GM12878 (cell line): ENCODE measurements at regions of chr16 and their contacts with region 1.

Region 1: GRCh38 chr16:68264128-68265077 is at the start of gene SLC7A6:
- DNase-seq: no peak
- ATAC-seq: peak; percentile 71
- H3K4me3 ChIP-seq: peak within 1 kb of the TSS; percentile 87
- H3K27ac ChIP-seq: peak within 1 kb of the TSS; percentile 85
- H3K4me1 ChIP-seq: peaks cover 18% of the 10 kb centered on the region
- H3K27me3 ChIP-seq: no peaks in the 10 kb centered on the region
- CTCF ChIP-seq: peak; percentile 77 to 85 (median 81); a peak in 5 of 6 replicates
- EP300 ChIP-seq: no peak
- POLR2A ChIP-seq: peak; percentile 81
- RAD21 ChIP-seq: peak; percentile 43
- polyA plus RNA-seq, gene SLC7A6: 8.2 TPM

Region 2: GRCh38 chr16:68237243-68238028 is 27.0 kb before region 1 on chr16:
- CTCF ChIA-PET with region 1: interaction called, 108 read pairs
- POLR2A ChIA-PET with region 1: no interaction called
- RAD21 ChIA-PET with region 1: interaction called, 22 read pairs
- SMC1A ChIA-PET with region 1: interaction called, 14 read pairs
- in situ Hi-C with region 1: no loop called
- intact Hi-C with region 1: no loop called
- DNase-seq: peak; percentile 86
- ATAC-seq: peak; percentile 93
- H3K4me3 ChIP-seq: peak overlapping the region; percentile 62
- H3K27ac ChIP-seq: peak overlapping the region; percentile 14; the same call in 1 of the 2 replicates
- H3K4me1 ChIP-seq: peaks cover 11% of the 10 kb centered on the region
- H3K27me3 ChIP-seq: no peaks in the 10 kb centered on the region
- CTCF ChIP-seq: no peak
- EP300 ChIP-seq: no peak
- POLR2A ChIP-seq: peak; percentile 76
- RAD21 ChIP-seq: no peak

Region 3: GRCh38 chr16:68275611-68276191 is 11.3 kb after region 1 on chr16:
- CTCF ChIA-PET with region 1: interaction called, 40 read pairs
- POLR2A ChIA-PET with region 1: interaction called, 6 read pairs
- RAD21 ChIA-PET with region 1: interaction called, 10 read pairs
- SMC1A ChIA-PET with region 1: interaction called, 253 read pairs
- in situ Hi-C with region 1: no loop called
- intact Hi-C with region 1: no loop called
- DNase-seq: peak; percentile 96
- ATAC-seq: peak; percentile 87
- H3K4me3 ChIP-seq: peak overlapping the region; percentile 28; the same call in 1 of the 2 replicates
- H3K27ac ChIP-seq: peak overlapping the region; percentile 70
- H3K4me1 ChIP-seq: peaks cover 37% of the 10 kb centered on the region
- H3K27me3 ChIP-seq: no peaks in the 10 kb centered on the region
- CTCF ChIP-seq: no peak
- EP300 ChIP-seq: peak; percentile 44 to 80; a peak in 3 of 4 replicates
- POLR2A ChIP-seq: no peak
- RAD21 ChIP-seq: no peak

Region 4: GRCh38 chr16:68298907-68299561 is 34.6 kb after region 1 on chr16:
- CTCF ChIA-PET with region 1: interaction called, 16 read pairs
- POLR2A ChIA-PET with region 1: interaction called, 3 read pairs
- RAD21 ChIA-PET with region 1: interaction called, 10 read pairs
- SMC1A ChIA-PET with region 1: interaction called, 11 read pairs
- in situ Hi-C with region 1: no loop called
- intact Hi-C with region 1: no loop called
- DNase-seq: no peak
- ATAC-seq: no peak
- H3K4me3 ChIP-seq: no peak overlapping the region
- H3K27ac ChIP-seq: no peak overlapping the region
- H3K4me1 ChIP-seq: no peaks in the 10 kb centered on the region
- H3K27me3 ChIP-seq: no peaks in the 10 kb centered on the region
- CTCF ChIP-seq: no peak
- EP300 ChIP-seq: no peak
- POLR2A ChIP-seq: 0 out of 2 replicates have a peak, but pooled peaks have one; percentile 8
- RAD21 ChIP-seq: no peak

Region 5: GRCh38 chr16:68328151-68328859 is 63.9 kb after region 1 on chr16:
- CTCF ChIA-PET with region 1: interaction called, 747 read pairs
- POLR2A ChIA-PET with region 1: interaction called, 58 read pairs
- RAD21 ChIA-PET with region 1: interaction called, 399 read pairs
- SMC1A ChIA-PET with region 1: interaction called, 198 read pairs
- in situ Hi-C with region 1: loop called (anchors 5 kb)
- intact Hi-C with region 1: loop called (anchors 1 kb)
- DNase-seq: peak; percentile 57
- ATAC-seq: peak; percentile 98
- H3K4me3 ChIP-seq: no peak overlapping the region
- H3K27ac ChIP-seq: no peak overlapping the region
- H3K4me1 ChIP-seq: peaks cover 22% of the 10 kb centered on the region
- H3K27me3 ChIP-seq: no peaks in the 10 kb centered on the region
- CTCF ChIP-seq: peak; percentile 92 to 99 (median 98); a peak in 5 of 6 replicates
- EP300 ChIP-seq: no peak
- POLR2A ChIP-seq: no peak
- RAD21 ChIP-seq: peak; percentile 98

Region 6: DNA sequence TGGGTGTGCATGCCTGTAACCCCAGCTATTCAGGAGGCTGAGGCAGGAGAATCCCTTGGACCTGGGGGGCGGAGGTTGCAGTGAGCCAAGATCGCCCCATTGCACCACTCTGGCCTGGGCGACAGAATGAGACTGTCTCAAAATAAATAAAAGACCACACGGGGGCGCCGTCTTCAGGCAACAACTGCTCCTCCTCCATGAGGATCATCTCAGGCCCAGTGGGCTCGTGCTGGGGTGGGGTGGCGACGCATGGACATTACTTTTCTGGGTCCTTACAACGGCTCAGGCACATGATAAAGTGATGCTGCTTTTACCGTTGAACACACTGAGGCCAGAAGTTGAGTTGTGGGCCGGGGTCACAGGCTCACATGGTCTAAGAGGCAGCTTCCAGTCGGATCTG is 102.6 kb after region 1 on chr16:
- CTCF ChIA-PET with region 1: interaction called, 10 read pairs
- POLR2A ChIA-PET with region 1: interaction called, 4 read pairs
- RAD21 ChIA-PET with region 1: interaction called, 6 read pairs
- SMC1A ChIA-PET with region 1: interaction called, 4 read pairs
- in situ Hi-C with region 1: no loop called
- intact Hi-C with region 1: no loop called
- DNase-seq: no peak
- ATAC-seq: peak; percentile 26
- H3K4me3 ChIP-seq: no peak overlapping the region
- H3K27ac ChIP-seq: no peak overlapping the region
- H3K4me1 ChIP-seq: peaks cover 42% of the 10 kb centered on the region
- H3K27me3 ChIP-seq: no peaks in the 10 kb centered on the region
- CTCF ChIP-seq: peak; percentile 34 to 42 (median 41); a peak in 5 of 6 replicates
- EP300 ChIP-seq: no peak
- POLR2A ChIP-seq: no peak
- RAD21 ChIP-seq: peak; percentile 34; the same call in 1 of the 2 replicates